Dendritic cell treated with granulocyte-macrophage colony-stimulating factor and Interleukin-4, amounts not matched to agents 40 ng/mL and 50 ng/mL, for 4 days (primary cell): ENCODE measurements at regions of chr7 and their contacts with region 1.

Region 1: GRCh38 chr7:77247206-77247850 is 47.7 kb upstream of the FGL2 start:
- H3K4me3 Mint-ChIP-seq: no peak overlapping the region
- H3K27ac Mint-ChIP-seq: no peak overlapping the region
- H3K4me1 Mint-ChIP-seq: peaks cover 44% of the 10 kb centered on the region
- H3K27me3 Mint-ChIP-seq: no peaks in the 10 kb centered on the region

Region 2: GRCh38 chr7:77293046-77293445 is 45.7 kb after region 1 on chr7:
- intact Hi-C with region 1: no loop called
- H3K4me3 Mint-ChIP-seq: no peak overlapping the region
- H3K27ac Mint-ChIP-seq: no peak overlapping the region
- H3K4me1 Mint-ChIP-seq: peaks cover 14% of the 10 kb centered on the region
- H3K27me3 Mint-ChIP-seq: no peaks in the 10 kb centered on the region

Region 3: GRCh38 chr7:77331938-77332695 is 84.8 kb after region 1 on chr7:
- intact Hi-C with region 1: loop called (anchors 5 kb)
- H3K4me3 Mint-ChIP-seq: no peak overlapping the region
- H3K27ac Mint-ChIP-seq: no peak overlapping the region
- H3K4me1 Mint-ChIP-seq: peaks cover 54% of the 10 kb centered on the region
- H3K27me3 Mint-ChIP-seq: no peaks in the 10 kb centered on the region

Region 4: DNA sequence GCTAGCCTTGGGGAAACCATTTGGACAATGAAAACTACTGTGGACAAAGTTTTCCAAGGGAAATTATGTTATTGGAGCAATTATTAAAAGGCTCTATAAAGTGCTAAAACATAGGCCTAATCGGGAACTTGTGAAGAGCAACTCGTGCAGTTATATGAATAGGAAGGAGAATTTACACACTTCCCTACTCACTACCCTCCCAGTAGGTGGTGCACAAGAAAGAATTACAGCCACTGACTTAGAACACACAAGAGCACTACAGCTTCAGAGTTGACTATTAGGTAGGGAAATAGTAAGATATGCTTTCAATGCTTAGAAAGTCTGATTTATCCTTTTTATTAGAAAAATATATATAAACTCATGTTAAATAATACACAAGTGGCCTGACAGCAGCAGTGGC is 121.6 kb after region 1 on chr7:
- intact Hi-C with region 1: no loop called
- H3K4me3 Mint-ChIP-seq: no peak overlapping the region
- H3K27ac Mint-ChIP-seq: no peak overlapping the region
- H3K4me1 Mint-ChIP-seq: peaks cover 26% of the 10 kb centered on the region
- H3K27me3 Mint-ChIP-seq: no peaks in the 10 kb centered on the region